ENCODE measurements at regions of chr7 and their contacts with region 1.

Region 1: DNA sequence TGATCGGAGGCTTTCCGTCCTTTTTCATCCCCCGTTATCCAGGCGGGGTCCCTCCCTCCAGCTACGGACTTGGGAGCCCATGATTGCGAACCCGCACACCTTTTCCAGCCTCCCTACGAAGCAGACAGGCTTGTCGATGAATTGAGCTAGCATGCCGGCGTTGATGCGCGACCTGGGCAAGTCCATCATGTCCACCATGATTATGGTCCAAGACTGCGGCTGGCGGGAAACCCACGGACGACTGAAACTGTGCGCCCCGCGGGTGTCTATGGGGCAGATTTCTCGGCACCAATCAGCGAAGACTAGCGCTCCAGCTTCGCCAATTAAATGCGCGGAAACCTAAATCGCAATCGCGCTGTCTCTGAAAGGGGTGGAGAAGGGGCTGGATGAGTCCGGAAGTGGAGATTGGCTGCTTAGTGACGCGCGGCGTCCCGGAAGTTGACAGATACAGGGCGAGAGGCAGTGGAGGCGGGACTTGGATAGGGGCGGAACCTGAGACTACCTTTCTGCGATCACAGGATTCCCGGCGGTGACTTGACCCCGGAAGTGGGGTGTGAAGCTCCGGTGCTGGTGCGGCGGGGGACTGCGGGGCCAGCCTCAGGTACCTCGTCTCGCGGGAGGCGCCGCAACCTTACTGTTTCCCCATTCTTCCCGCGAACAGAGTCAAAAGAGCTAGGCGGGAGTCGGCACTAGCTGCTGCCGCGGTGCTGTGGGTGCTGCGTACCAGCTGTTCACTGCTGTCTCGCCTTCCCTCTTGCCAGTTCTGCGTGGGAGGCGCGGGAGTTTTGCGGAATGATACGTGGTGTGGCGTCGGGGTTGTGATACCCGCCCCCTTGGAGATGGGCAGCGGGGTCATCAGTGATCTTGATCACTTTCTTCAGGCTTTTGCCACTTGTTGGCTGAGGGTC is at the start of gene UMAD1:
- DNase-seq: peak; percentile 92
- ATAC-seq: peak; percentile 88
- H3K4me3 Mint-ChIP-seq: peak within 1 kb of the TSS; percentile 97
- H3K27ac Mint-ChIP-seq: peak within 1 kb of the TSS; percentile 97
- H3K4me1 Mint-ChIP-seq: peaks cover 38% of the 10 kb centered on the region
- H3K27me3 Mint-ChIP-seq: no peaks in the 10 kb centered on the region
- CTCF ChIP-seq: no peak
- total RNA-seq, gene UMAD1: 13.9 and 15.4 TPM in 2 replicates

Region 2: DNA sequence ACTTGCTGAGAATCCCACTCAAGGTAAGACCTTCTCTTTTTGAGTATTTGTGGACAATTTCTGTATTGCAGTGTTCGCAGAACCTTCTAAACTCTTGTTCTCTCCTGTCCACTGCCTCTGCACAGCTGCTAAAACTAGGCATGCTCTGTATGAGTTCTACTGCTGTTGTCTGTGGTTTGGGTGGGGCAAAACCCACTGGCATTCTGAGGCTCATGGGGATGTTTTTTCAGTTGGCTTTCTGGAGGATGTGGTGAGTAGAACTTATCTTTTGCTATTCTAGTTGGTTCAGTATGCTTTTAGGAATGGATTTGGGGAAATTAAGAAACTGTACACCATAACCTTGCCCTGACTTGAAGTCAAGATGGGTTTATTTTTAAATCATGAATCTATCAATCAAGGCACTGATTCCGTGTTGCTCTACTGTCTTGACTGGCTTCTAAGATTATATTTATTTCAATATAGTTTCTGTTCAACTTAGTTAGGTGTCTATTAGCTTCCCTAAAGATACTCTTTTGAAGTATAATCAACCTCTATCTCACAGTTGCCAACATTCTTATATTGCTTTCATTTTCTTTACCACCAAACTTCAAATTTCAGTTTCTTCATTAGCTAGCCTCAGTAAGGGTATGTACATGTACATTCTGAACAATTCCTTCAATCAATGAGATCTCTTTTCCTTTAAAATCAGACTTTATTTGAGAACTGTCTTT is 483.1 kb before region 1 on chr7:
- CTCF ChIA-PET with region 1: no interaction called
- POLR2A ChIA-PET with region 1: interaction called, 3 read pairs
- intact Hi-C with region 1: loop called (anchors 1 kb)
- DNase-seq: no peak
- ATAC-seq: peak; percentile 86
- H3K4me3 Mint-ChIP-seq: peak overlapping the region; percentile 88
- H3K27ac Mint-ChIP-seq: peak overlapping the region; percentile 95
- H3K4me1 Mint-ChIP-seq: peaks cover 56% of the 10 kb centered on the region
- H3K27me3 Mint-ChIP-seq: no peaks in the 10 kb centered on the region
- CTCF ChIP-seq: no peak

Region 3: DNA sequence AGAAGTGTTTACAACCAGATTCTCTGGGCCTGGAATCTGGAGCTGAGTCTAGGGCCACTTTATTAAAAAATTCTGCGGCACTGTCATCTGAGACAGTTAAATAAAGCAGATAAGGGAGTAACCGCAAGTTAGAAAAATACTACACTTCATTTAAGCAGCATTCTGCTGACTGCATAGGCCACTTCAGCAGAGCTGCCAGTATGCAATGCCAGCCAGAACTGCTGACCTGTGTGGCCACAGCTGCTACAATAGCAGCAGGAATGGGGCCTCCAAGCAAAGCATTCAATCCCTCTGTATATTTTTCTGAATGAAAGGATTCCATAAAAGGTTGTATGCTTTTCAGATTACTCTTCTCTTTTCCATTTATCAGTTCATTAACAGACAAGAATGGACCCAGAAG is 240.8 kb before region 1 on chr7:
- CTCF ChIA-PET with region 1: no interaction called
- POLR2A ChIA-PET with region 1: no interaction called
- intact Hi-C with region 1: no loop called
- DNase-seq: no peak
- ATAC-seq: no peak
- H3K4me3 Mint-ChIP-seq: no peak overlapping the region
- H3K27ac Mint-ChIP-seq: no peak overlapping the region
- H3K4me1 Mint-ChIP-seq: no peaks in the 10 kb centered on the region
- H3K27me3 Mint-ChIP-seq: peaks cover 6% of the 10 kb centered on the region
- CTCF ChIP-seq: no peak

Region 4: DNA sequence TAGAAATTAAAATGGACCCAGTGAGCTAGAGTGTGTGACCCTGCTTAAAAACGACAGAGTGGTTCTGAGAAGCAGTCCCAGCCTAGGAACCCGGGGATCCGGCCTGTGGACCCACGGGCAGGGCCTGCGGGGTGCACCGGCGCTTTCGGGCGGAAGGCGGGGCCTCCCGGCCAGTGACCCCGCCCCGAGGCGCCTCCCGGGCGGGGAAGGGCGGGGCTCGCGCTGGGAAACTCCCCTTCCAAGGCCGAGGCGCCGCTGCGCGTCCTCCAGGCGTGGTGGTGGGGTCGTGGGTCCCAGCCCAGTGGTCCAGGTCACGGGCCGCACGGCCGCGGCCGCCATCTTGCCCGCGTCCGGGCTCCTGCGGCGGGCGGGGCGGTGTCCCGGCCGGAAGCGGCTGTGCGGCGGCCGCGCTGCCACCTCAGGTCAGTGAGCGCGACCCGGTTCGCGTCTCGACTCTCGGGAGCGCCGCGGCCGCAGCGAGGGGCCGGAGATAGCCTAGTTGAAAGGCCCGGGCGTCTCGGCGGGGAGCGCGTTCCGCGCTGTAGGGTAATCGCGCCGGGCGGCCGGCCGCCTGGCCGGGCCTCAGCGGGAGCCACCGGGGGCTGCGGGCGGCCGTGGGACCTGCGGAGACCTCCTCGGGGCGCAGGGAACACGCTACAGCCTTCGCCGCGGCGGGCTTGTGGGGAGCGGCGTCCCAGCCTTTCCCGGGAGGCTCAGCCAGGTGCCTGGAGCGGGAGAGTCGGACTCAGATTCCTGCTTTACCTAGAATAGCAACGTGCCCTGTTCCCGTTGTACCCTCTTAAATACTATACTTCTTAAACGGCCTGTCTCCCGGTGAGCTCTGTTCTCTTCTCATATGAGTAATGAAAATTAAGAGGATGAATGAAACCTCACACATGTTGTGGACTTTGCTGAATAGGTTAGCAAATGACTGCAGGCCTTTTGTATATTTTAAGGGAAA is 73.5 kb before region 1 on chr7 and contains the start of gene MIOS:
- CTCF ChIA-PET with region 1: no interaction called
- POLR2A ChIA-PET with region 1: interaction called, 29 read pairs
- intact Hi-C with region 1: loop called (anchors 1 kb)
- DNase-seq: peak; percentile 85
- ATAC-seq: peak; percentile 83
- H3K4me3 Mint-ChIP-seq: peak within 1 kb of the TSS; percentile 85
- H3K27ac Mint-ChIP-seq: peak within 1 kb of the TSS; percentile 90
- H3K4me1 Mint-ChIP-seq: peaks cover 35% of the 10 kb centered on the region
- H3K27me3 Mint-ChIP-seq: no peaks in the 10 kb centered on the region
- CTCF ChIP-seq: no peak
- total RNA-seq, gene MIOS: 70.2 and 81.3 TPM in 2 replicates

Region 5: GRCh38 chr7:7867846-7868571 is 227.5 kb after region 1 on chr7:
- CTCF ChIA-PET with region 1: no interaction called
- POLR2A ChIA-PET with region 1: no interaction called
- intact Hi-C with region 1: loop called (anchors 5 kb)
- DNase-seq: no peak
- ATAC-seq: peak; percentile 72
- H3K4me3 Mint-ChIP-seq: no peak overlapping the region
- H3K27ac Mint-ChIP-seq: no peak overlapping the region
- H3K4me1 Mint-ChIP-seq: peaks cover 4% of the 10 kb centered on the region
- H3K27me3 Mint-ChIP-seq: no peaks in the 10 kb centered on the region
- CTCF ChIP-seq: no peak

Region 6: DNA sequence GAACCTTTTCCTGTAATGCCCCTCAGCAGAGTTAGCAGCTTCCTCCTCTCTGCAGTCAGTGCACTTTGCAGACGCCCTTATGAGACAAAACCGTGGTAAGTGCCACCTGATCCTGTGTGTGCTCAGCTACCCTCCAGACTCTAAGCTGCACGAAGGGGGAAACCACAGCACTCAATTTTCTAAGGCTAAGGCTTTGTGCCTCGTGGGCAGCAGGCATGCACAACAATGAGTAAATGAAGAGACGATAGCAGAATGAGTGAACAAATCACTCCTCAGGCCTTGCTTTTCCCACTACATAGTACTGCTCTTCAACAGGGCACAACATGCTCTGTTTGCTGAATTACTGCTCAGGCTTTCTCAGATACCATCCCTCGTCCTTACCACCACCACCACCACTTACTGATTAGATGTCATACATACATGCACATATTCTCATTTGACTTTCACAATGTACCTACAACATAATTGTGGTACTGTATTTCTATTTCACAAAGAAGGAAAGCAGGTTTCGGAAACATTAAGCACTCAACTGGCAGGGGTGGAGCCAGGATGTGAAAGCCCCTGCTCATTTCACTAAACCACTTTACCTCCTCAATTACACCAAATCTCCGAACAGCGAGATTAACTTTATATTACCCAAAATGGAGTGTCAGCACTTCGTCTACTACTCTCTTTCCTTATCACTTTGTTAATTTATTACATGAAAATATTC is 536.1 kb after region 1 on chr7:
- CTCF ChIA-PET with region 1: no interaction called
- POLR2A ChIA-PET with region 1: interaction called, 15 read pairs
- intact Hi-C with region 1: loop called (anchors 1 kb)
- DNase-seq: peak; percentile 21
- ATAC-seq: peak; percentile 89
- H3K4me3 Mint-ChIP-seq: peak overlapping the region; percentile 61
- H3K27ac Mint-ChIP-seq: peak overlapping the region; percentile 91
- H3K4me1 Mint-ChIP-seq: peaks cover 61% of the 10 kb centered on the region
- H3K27me3 Mint-ChIP-seq: no peaks in the 10 kb centered on the region
- CTCF ChIP-seq: no peak

Measured in activated B cell treated with CpG ODN at 0.5 μM for 24 hours (primary cell).